H1 (cell line): ENCODE measurements at regions of chrX and their contacts with region 1.

Region 1: GRCh38 chrX:38206036-38206435 is 14.6 kb downstream of the SRPX start:
- DNase-seq: no peak
- H3K4me3 ChIP-seq: no peak overlapping the region
- H3K27ac ChIP-seq: no peak overlapping the region
- H3K4me1 ChIP-seq: no peaks in the 10 kb centered on the region
- H3K27me3 ChIP-seq: no peaks in the 10 kb centered on the region
- CTCF ChIP-seq: no peak; a peak in 1 of 4 replicates
- EP300 ChIP-seq: no peak
- POLR2A ChIP-seq: no peak
- RAD21 ChIP-seq: no peak

Region 2: GRCh38 chrX:38192007-38192810 is 13.8 kb before region 1 on chrX:
- CTCF ChIA-PET with region 1: interaction called, 12 read pairs
- POLR2A ChIA-PET with region 1: no interaction called
- DNase-seq: peak in 1 of 2 experiments; percentile 45
- H3K4me3 ChIP-seq: no peak overlapping the region
- H3K27ac ChIP-seq: no peak overlapping the region
- H3K4me1 ChIP-seq: no peaks in the 10 kb centered on the region
- H3K27me3 ChIP-seq: no peaks in the 10 kb centered on the region
- CTCF ChIP-seq: peak; percentile 32 to 45 (median 42)
- EP300 ChIP-seq: no peak
- POLR2A ChIP-seq: no peak
- RAD21 ChIP-seq: peak; percentile 38 to 58